ENCODE measurements at regions of chr12 and their contacts with region 1.

Region 1: DNA sequence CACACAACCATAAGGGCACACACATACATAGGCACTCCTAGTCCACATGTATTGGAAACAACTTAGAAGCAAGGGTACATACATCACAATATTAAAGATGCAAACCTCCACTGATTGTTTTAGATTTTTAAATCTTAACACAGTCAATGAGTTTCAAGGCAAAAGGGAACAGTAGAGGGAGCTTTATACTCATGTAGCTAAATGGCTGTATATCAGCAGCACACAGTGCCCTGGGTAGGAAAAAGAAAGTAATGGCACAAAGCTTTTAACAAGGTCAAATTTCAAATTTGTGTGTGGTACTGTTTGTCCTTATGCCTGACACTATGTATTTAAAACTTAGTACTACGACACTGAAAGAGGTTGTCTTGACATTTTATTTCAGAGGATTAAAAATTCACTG is 262.0 kb downstream of the MED13L start:
- DNase-seq: no peak
- ATAC-seq: peak; percentile 80

Region 2: GRCh38 chr12:115485503-115485902 is 530.0 kb before region 1 on chr12:
- intact Hi-C with region 1: no loop called
- DNase-seq: no peak
- ATAC-seq: no peak

Region 3: DNA sequence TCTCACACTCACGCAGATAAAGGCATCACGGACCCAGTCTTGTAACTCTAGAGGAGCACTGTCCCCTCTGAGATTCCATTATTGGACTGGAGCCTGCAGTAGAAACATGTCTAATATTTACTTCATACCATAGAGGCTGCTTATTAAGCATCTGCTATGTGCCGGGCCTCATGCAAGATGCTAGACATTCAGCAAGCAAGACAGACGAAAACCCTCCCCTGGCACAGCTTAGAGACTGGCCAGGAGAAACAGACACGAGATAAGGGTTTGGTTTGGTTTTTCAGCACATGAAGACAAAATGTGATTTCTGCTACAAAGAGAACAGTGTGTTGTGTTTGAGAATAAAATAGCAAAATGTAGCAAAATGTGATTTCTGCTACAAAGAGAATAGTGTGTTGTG is 457.2 kb before region 1 on chr12:
- intact Hi-C with region 1: no loop called
- DNase-seq: no peak
- ATAC-seq: no peak

Region 4: GRCh38 chr12:116142936-116143898 is 127.7 kb after region 1 on chr12:
- intact Hi-C with region 1: loop called (anchors 10 kb)
- DNase-seq: no peak
- ATAC-seq: peak; percentile 9

Region 5: DNA sequence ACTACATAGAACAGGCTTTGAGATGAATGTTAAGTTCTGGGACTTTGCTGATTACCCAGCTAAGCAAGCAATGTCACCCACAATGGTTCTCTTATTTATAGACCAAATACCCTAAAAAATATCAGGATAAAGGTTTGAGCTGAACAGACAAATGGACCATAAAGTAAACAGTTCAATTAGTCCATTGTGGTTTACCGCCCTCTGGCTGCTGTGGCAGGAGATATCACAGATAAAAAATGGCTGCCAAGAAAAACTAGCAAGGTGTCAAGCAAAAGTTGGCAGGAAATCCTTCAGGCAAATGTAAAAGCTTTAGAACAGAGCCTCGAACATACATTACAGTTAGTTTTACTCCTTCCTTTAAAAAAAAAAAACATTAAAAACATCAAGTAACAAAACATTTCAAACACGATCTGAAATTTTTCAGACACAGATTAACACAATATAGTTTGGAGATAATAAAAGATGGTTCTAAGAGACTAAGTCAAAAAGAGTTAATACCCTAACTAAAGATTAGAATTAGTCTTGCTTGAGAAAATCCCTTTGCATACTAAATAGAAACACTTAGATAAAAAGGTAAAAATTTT is 220.7 kb after region 1 on chr12:
- intact Hi-C with region 1: loop called (anchors 10 kb)
- DNase-seq: peak; percentile 42
- ATAC-seq: peak; percentile 68

Region 6: DNA sequence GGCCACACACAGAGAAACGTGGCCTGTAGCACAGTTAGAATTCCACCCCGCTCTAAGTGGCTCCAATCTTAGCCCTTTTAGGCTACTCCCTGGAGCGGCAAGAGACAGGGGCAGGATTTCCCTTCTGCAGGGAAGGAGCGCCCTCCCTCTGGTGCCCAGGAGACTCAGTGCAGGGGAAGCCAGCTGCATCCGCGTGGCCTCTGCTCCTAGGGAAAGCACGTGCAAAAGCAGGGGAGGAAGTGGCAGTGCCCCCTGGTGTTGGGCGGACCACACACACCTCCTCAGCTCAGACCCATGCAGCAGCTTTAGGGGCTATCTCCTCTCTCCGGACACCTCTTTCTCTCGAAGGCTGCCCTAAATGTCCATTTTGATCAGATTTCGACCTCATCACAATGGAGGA is 672.4 kb after region 1 on chr12:
- intact Hi-C with region 1: no loop called
- DNase-seq: peak; percentile 61
- ATAC-seq: peak; percentile 71

Region 7: GRCh38 chr12:116703214-116703795 is 687.8 kb after region 1 on chr12:
- intact Hi-C with region 1: loop called (anchors 10 kb)
- DNase-seq: peak; percentile 69
- ATAC-seq: peak; percentile 85